Ovary (tissue), 10 donors: ENCODE measurements at regions of chr15 and their contacts with region 1.

Region 1: GRCh38 chr15:63157118-63157843 is at the start of gene RPS27L:
- DNase-seq: peak; percentile 88 to 91 (median 89)
- H3K4me3 ChIP-seq: peak within 1 kb of the TSS; percentile 97
- H3K27ac ChIP-seq: peak within 1 kb of the TSS; percentile 37 to 96
- H3K4me1 ChIP-seq: peaks cover 2% of the 10 kb centered on the region
- H3K27me3 ChIP-seq: no peaks in the 10 kb centered on the region
- CTCF ChIP-seq: peak in 1 of 3 donors; percentile 10
- EP300 ChIP-seq: no peak
- POLR2A ChIP-seq: peak; percentile 69
- total RNA-seq, gene RPS27L: 85.5 to 129 (median 95.0) TPM

Region 2: GRCh38 chr15:63277038-63277892 is 120.0 kb after region 1 on chr15 and contains the start of gene APH1B:
- intact Hi-C with region 1: loop called in 1 of 4 experiments (anchors 10 kb)
- DNase-seq: peak; percentile 82 to 92 (median 88)
- H3K4me3 ChIP-seq: peak within 1 kb of the TSS; percentile 76
- H3K27ac ChIP-seq: peak within 1 kb of the TSS; percentile 90 to 94
- H3K4me1 ChIP-seq: peaks cover 5% of the 10 kb centered on the region
- H3K27me3 ChIP-seq: no peaks in the 10 kb centered on the region
- CTCF ChIP-seq: peak in 1 of 3 donors; percentile 19
- EP300 ChIP-seq: peak; percentile 14
- POLR2A ChIP-seq: peak; percentile 27
- total RNA-seq, gene APH1B: 13.2 to 25.2 (median 22.6) TPM

Region 3: GRCh38 chr15:63402498-63403253 is 245.4 kb after region 1 on chr15:
- intact Hi-C with region 1: loop called in 2 of 4 experiments (anchors 10 kb)
- DNase-seq: no peak
- H3K4me3 ChIP-seq: no peak overlapping the region
- H3K27ac ChIP-seq: no peak overlapping the region
- H3K4me1 ChIP-seq: no peaks in the 10 kb centered on the region
- H3K27me3 ChIP-seq: no peaks in the 10 kb centered on the region
- CTCF ChIP-seq: peak; percentile 19 to 50 (median 46)
- EP300 ChIP-seq: no peak
- POLR2A ChIP-seq: no peak